CD8-positive, alpha-beta T cell (primary cell): ENCODE measurements at regions of chr20 and their contacts with region 1.

Region 1: GRCh38 chr20:49812463-49813304 is at the start of gene SLC9A8:
- DNase-seq: peak; percentile 63 to 96 (median 82)
- ATAC-seq: peak; percentile 88
- H3K4me3 ChIP-seq: peak within 1 kb of the TSS; percentile 79 to 90
- H3K4me3 Mint-ChIP-seq: peak within 1 kb of the TSS; percentile 95
- H3K27ac ChIP-seq: peak within 1 kb of the TSS; percentile 84 to 95
- H3K27ac Mint-ChIP-seq: peak within 1 kb of the TSS; percentile 99
- H3K4me1 ChIP-seq: peaks cover 20% of the 10 kb centered on the region
- H3K4me1 Mint-ChIP-seq: peaks cover 35% of the 10 kb centered on the region
- H3K27me3 ChIP-seq: no peaks in the 10 kb centered on the region
- H3K27me3 Mint-ChIP-seq: no peaks in the 10 kb centered on the region
- CTCF ChIP-seq: peak; percentile 14
- total RNA-seq, gene SLC9A8: 30.7 to 32.9 TPM

Region 2: DNA sequence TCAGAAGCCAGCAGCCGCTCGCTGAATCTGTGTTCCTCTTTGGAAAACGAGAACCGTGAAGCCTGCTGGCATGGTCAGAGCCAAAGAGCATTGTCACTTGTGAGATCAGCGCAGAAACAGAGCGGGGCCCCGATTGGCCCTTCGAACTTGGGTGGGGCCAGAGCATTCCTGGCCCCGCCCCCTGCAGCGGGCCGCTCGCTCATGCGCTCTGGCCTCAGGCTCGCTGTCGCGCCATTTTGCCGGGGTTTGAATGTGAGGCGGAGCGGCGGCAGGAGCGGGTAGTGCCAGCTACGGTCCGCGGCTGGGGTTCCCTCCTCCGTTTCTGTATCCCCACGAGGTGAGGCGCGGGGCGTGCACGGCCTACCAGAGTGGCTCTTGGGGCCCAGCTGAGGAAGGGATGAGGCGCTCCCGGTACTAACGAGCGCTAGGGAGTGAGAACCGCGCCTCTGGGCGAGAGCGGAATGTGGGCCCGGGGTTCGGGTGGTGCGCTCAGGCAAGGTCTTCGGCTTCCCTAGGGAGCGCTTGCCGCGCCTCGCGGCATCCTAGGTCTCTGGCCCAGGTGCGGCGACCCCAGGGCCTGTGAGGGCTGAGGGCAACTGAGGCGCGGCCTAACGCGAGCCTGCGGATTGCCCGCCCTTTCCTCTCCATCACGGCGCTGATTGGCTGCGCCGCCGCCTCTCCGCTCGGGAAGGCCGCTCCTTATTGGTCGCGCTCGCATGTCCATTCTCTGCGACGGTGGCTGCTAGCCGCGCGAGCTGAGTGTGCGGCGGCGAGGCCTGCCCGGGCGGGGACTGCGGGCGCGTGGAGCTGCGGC is 766.4 kb before region 1 on chr20 and contains the start of gene CSE1L:
- CTCF ChIA-PET with region 1: no interaction called
- POLR2A ChIA-PET with region 1: no interaction called
- intact Hi-C with region 1: loop called (anchors 2 to 5 kb)
- DNase-seq: peak; percentile 86 to 98 (median 95)
- ATAC-seq: peak; percentile 89
- H3K4me3 ChIP-seq: peak within 1 kb of the TSS; percentile 81 to 96
- H3K4me3 Mint-ChIP-seq: peak within 1 kb of the TSS; percentile 98
- H3K27ac ChIP-seq: peak within 1 kb of the TSS; percentile 85 to 90
- H3K27ac Mint-ChIP-seq: peak within 1 kb of the TSS; percentile 97
- H3K4me1 ChIP-seq: peaks cover 27% of the 10 kb centered on the region
- H3K4me1 Mint-ChIP-seq: peaks cover 34% of the 10 kb centered on the region
- H3K27me3 ChIP-seq: no peaks in the 10 kb centered on the region
- H3K27me3 Mint-ChIP-seq: no peaks in the 10 kb centered on the region
- CTCF ChIP-seq: no peak
- total RNA-seq, gene CSE1L: 31.8 to 33.4 TPM

Region 3: GRCh38 chr20:49676581-49677291 is 135.9 kb before region 1 on chr20:
- CTCF ChIA-PET with region 1: no interaction called
- POLR2A ChIA-PET with region 1: no interaction called
- intact Hi-C with region 1: no loop called
- DNase-seq: peak in 8 of 9 experiments; percentile 13 to 88 (median 44)
- ATAC-seq: peak; percentile 78
- H3K4me3 ChIP-seq: no peak overlapping the region
- H3K4me3 Mint-ChIP-seq: peak overlapping the region; percentile 26
- H3K27ac ChIP-seq: peak overlapping the region; percentile 25 to 72
- H3K27ac Mint-ChIP-seq: peak overlapping the region; percentile 89
- H3K4me1 ChIP-seq: peaks cover 33% of the 10 kb centered on the region
- H3K4me1 Mint-ChIP-seq: peaks cover 71% of the 10 kb centered on the region
- H3K27me3 ChIP-seq: no peaks in the 10 kb centered on the region
- H3K27me3 Mint-ChIP-seq: no peaks in the 10 kb centered on the region
- CTCF ChIP-seq: no peak

Region 4: GRCh38 chr20:49713753-49714712 is 98.7 kb before region 1 on chr20 and contains the start of gene B4GALT5:
- CTCF ChIA-PET with region 1: no interaction called
- POLR2A ChIA-PET with region 1: interaction called, 12 read pairs
- intact Hi-C with region 1: loop called (anchors 1 to 2 kb)
- DNase-seq: peak; percentile 26 to 83 (median 59)
- ATAC-seq: peak; percentile 85
- H3K4me3 ChIP-seq: peak within 1 kb of the TSS; percentile 79 to 86
- H3K4me3 Mint-ChIP-seq: peak within 1 kb of the TSS; percentile 94
- H3K27ac ChIP-seq: peak within 1 kb of the TSS; percentile 51 to 75
- H3K27ac Mint-ChIP-seq: peak within 1 kb of the TSS; percentile 87
- H3K4me1 ChIP-seq: peaks cover 32% of the 10 kb centered on the region
- H3K4me1 Mint-ChIP-seq: peaks cover 49% of the 10 kb centered on the region
- H3K27me3 ChIP-seq: no peaks in the 10 kb centered on the region
- H3K27me3 Mint-ChIP-seq: no peaks in the 10 kb centered on the region
- CTCF ChIP-seq: no peak
- total RNA-seq, gene B4GALT5: 7.8 to 7.9 TPM

Region 5: DNA sequence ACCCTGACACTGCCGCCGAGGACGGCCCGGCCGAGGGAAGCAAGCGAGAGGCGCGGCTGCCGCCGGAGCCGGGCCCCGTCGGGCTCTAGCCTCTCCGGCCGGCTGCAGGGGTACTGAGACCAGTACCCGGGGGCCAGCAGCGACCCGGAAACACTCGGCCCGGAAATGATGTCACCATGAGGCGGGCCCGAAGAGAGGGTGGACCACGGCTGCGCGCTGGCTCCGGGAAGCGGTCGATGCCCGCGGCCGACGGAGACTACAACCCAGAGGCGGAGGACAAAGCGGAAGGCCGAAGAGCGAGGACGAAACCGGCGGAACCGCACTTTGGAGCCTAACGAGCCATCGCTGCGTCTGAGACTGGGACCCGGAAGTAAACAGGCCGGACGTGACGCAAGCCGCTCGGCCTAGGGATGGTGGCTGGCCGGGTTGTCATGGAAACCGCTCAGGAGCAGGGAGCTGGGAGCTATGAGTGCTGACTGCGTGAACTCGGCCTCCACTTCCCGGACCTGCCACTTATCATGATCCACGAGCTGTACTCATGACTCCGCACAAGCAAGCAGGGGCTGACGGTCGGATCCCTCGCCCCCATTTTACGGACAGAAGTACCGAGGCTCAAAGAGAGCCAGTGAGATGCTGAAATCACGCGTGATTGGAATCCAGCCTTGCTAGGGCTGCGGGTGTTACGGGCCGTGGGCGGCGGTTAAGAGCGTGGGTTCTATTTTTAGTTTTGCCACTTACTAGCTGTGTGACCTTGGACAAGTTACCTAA is 102.9 kb after region 1 on chr20 and contains the start of gene SPATA2:
- CTCF ChIA-PET with region 1: interaction called, 3 read pairs
- POLR2A ChIA-PET with region 1: no interaction called
- intact Hi-C with region 1: loop called (anchors 1 kb)
- DNase-seq: peak; percentile 87 to 98 (median 95)
- ATAC-seq: peak; percentile 75
- H3K4me3 ChIP-seq: peak within 1 kb of the TSS; percentile 67 to 100
- H3K4me3 Mint-ChIP-seq: peak within 1 kb of the TSS; percentile 98
- H3K27ac ChIP-seq: peak within 1 kb of the TSS; percentile 99 to 100
- H3K27ac Mint-ChIP-seq: peak within 1 kb of the TSS; percentile 100
- H3K4me1 ChIP-seq: peaks cover 21% of the 10 kb centered on the region
- H3K4me1 Mint-ChIP-seq: peaks cover 39% of the 10 kb centered on the region
- H3K27me3 ChIP-seq: no peaks in the 10 kb centered on the region
- H3K27me3 Mint-ChIP-seq: no peaks in the 10 kb centered on the region
- CTCF ChIP-seq: no peak
- total RNA-seq, gene SPATA2: 20.9 to 22.4 TPM

Region 6: GRCh38 chr20:49936153-49937027 is 123.7 kb after region 1 on chr20 and contains the start of gene RNF114:
- CTCF ChIA-PET with region 1: no interaction called
- POLR2A ChIA-PET with region 1: interaction called, 6 read pairs
- intact Hi-C with region 1: loop called (anchors 1 to 2 kb)
- DNase-seq: peak; percentile 82 to 95 (median 90)
- ATAC-seq: peak; percentile 96
- H3K4me3 ChIP-seq: peak within 1 kb of the TSS; percentile 96 to 99
- H3K4me3 Mint-ChIP-seq: peak within 1 kb of the TSS; percentile 98
- H3K27ac ChIP-seq: peak within 1 kb of the TSS; percentile 89 to 95
- H3K27ac Mint-ChIP-seq: peak within 1 kb of the TSS; percentile 96
- H3K4me1 ChIP-seq: peaks cover 30% of the 10 kb centered on the region
- H3K4me1 Mint-ChIP-seq: peaks cover 46% of the 10 kb centered on the region
- H3K27me3 ChIP-seq: no peaks in the 10 kb centered on the region
- H3K27me3 Mint-ChIP-seq: no peaks in the 10 kb centered on the region
- CTCF ChIP-seq: no peak
- total RNA-seq, gene RNF114: 137 to 151 TPM

Region 7: GRCh38 chr20:50189681-50190582 is 377.2 kb after region 1 on chr20:
- CTCF ChIA-PET with region 1: no interaction called
- POLR2A ChIA-PET with region 1: no interaction called
- intact Hi-C with region 1: no loop called
- DNase-seq: peak; percentile 61 to 89 (median 83)
- ATAC-seq: peak; percentile 60
- H3K4me3 ChIP-seq: peak overlapping the region; percentile 29 to 72
- H3K4me3 Mint-ChIP-seq: peak overlapping the region; percentile 65
- H3K27ac ChIP-seq: peak overlapping the region; percentile 19 to 91
- H3K27ac Mint-ChIP-seq: peak overlapping the region; percentile 45
- H3K4me1 ChIP-seq: peaks cover 19% of the 10 kb centered on the region
- H3K4me1 Mint-ChIP-seq: peaks cover 24% of the 10 kb centered on the region
- H3K27me3 ChIP-seq: no peaks in the 10 kb centered on the region
- H3K27me3 Mint-ChIP-seq: peaks cover 8% of the 10 kb centered on the region
- CTCF ChIP-seq: peak; percentile 65